Motor neuron (in vitro differentiated cells): ENCODE measurements at regions of chr22 and their contacts with region 1.

Region 1: GRCh38 chr22:46006379-46007002 is 29.5 kb upstream of the WNT7B start:
- ATAC-seq: peak; percentile 58 to 91 (median 77)
- H3K4me3 ChIP-seq: no peak overlapping the region
- H3K27ac ChIP-seq: no peak overlapping the region
- H3K4me1 ChIP-seq: peaks cover 4 to 5% of the 10 kb centered on the region in 2 donors

Region 2: GRCh38 chr22:45817745-45818423 is 188.6 kb before region 1 on chr22:
- in situ Hi-C with region 1: no loop called
- ATAC-seq: peak in 5 of 8 experiments; percentile 42 to 94 (median 65)
- H3K4me3 ChIP-seq: no peak overlapping the region
- H3K27ac ChIP-seq: no peak overlapping the region
- H3K4me1 ChIP-seq: no peaks in the 10 kb centered on the region

Region 3: GRCh38 chr22:46057762-46058420 is 51.4 kb after region 1 on chr22:
- in situ Hi-C with region 1: no loop called
- ATAC-seq: peak in 3 of 8 experiments; percentile 7 to 22 (median 15)
- H3K4me3 ChIP-seq: no peak overlapping the region
- H3K27ac ChIP-seq: no peak overlapping the region
- H3K4me1 ChIP-seq: peaks cover 0 to 13% of the 10 kb centered on the region in 2 donors

Region 4: GRCh38 chr22:46090036-46090591 is 83.6 kb after region 1 on chr22:
- in situ Hi-C with region 1: loop called in 1 of 9 experiments (anchors 10 kb)
- ATAC-seq: peak in 2 of 8 experiments; percentile 5 to 26
- H3K4me3 ChIP-seq: no peak overlapping the region
- H3K27ac ChIP-seq: no peak overlapping the region
- H3K4me1 ChIP-seq: peaks cover 11 to 17% of the 10 kb centered on the region in 2 donors

Region 5: GRCh38 chr22:46108564-46109473 is 102.3 kb after region 1 on chr22:
- in situ Hi-C with region 1: loop called in 7 of 9 experiments (anchors 10 to 25 kb)
- ATAC-seq: peak in 3 of 8 experiments; percentile 4 to 17 (median 10)
- H3K4me3 ChIP-seq: no peak overlapping the region
- H3K27ac ChIP-seq: no peak overlapping the region
- H3K4me1 ChIP-seq: peaks cover 10 to 16% of the 10 kb centered on the region in 2 donors